ENCODE measurements at regions of chr12 and their contacts with region 1.

Region 1: GRCh38 chr12:46382964-46383653 is 10.5 kb upstream of the SLC38A2 start:
- H3K4me3 Mint-ChIP-seq: peak overlapping the region; percentile 87
- H3K27ac Mint-ChIP-seq: peak overlapping the region; percentile 99
- H3K4me1 Mint-ChIP-seq: peaks cover 44% of the 10 kb centered on the region
- H3K27me3 Mint-ChIP-seq: peaks cover 2% of the 10 kb centered on the region

Region 2: DNA sequence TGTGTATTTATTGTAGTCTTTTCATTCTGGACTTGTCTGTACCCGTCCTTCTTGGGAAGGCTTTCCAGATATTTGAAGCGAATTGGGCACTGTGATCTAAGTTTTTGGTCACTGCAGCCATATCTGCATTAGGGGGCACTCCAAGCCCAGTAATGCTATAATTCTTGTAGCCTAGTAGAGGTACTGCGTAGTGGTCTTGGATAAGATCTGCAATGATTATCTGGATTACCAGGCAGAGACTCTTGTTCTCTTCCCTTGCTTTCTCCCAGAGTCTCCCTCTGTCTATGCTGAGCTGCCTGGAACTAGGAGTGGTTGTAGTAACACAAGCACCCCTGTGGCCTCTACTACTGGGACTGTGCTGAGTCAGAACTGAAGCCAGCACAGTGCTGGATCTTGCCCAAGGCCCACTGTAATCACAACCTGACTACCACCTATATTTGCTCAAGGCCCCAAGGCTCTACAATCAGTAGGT is 40.5 kb before region 1 on chr12:
- intact Hi-C with region 1: no loop called
- H3K4me3 Mint-ChIP-seq: no peak overlapping the region
- H3K27ac Mint-ChIP-seq: no peak overlapping the region
- H3K4me1 Mint-ChIP-seq: no peaks in the 10 kb centered on the region
- H3K27me3 Mint-ChIP-seq: peaks cover 2% of the 10 kb centered on the region

Region 3: GRCh38 chr12:46372544-46373110 is 10.5 kb before region 1 on chr12 and contains the start of gene SLC38A2:
- intact Hi-C with region 1: loop called (anchors 1 kb)
- H3K4me3 Mint-ChIP-seq: peak within 1 kb of the TSS; percentile 93
- H3K27ac Mint-ChIP-seq: peak within 1 kb of the TSS; percentile 99
- H3K4me1 Mint-ChIP-seq: peaks cover 38% of the 10 kb centered on the region
- H3K27me3 Mint-ChIP-seq: peaks cover 6% of the 10 kb centered on the region

Region 4: DNA sequence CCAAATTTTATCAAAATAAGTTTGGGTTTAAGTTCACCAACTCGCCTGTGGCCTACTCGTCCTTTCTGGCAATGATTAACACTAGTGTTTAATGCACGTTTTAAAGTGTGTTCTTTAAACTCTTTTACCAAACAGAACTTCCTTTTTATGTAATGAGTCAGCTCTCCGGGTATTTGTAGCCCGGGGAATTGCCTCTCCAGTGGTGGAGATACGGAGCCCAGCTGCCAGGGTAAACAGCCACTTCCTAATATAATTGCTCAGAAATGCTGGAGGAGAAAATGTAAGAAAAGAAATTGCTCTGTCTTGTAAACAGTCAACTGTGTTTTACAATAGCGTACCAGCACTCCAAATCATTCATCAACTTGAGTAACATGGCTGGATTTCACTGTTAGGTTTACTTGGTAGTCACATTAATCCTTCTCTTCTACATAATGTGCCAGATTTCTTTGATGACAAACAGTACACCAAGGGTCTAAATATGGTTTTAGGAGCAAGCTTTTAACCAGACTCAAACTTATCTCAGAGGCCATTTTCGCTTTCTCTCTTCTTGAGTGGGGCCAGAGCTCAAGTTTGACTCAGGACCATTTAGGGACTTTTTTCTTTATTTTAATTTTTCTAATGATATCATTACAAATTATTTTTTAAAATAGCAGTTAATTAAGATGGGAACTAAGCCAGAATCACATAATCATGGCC is 90.7 kb after region 1 on chr12:
- intact Hi-C with region 1: loop called (anchors 5 kb)
- H3K4me3 Mint-ChIP-seq: peak overlapping the region; percentile 32
- H3K27ac Mint-ChIP-seq: peak overlapping the region; percentile 86
- H3K4me1 Mint-ChIP-seq: peaks cover 35% of the 10 kb centered on the region
- H3K27me3 Mint-ChIP-seq: no peaks in the 10 kb centered on the region

Region 5: GRCh38 chr12:46627686-46628085 is 244.6 kb after region 1 on chr12:
- intact Hi-C with region 1: no loop called
- H3K4me3 Mint-ChIP-seq: no peak overlapping the region
- H3K27ac Mint-ChIP-seq: no peak overlapping the region
- H3K4me1 Mint-ChIP-seq: peaks cover 5% of the 10 kb centered on the region
- H3K27me3 Mint-ChIP-seq: no peaks in the 10 kb centered on the region

Region 6: DNA sequence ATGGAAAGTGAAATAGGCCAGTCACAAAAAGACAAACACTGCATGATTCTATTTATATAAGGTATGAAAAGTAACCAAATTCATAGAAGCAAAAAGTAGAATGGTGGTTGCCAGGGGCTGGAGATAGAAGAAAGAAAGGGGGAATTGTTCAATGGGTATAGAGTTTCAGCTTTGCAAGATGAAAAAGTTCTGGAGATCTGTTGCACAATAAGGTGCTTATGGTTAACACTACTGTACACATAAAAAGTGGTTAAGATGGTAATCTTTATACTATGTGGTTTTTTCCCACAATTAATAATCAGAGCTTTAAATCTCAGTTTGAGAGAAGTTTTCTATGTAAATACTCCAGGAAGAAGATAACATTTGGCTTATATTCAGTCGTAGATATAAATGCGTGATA is 369.3 kb after region 1 on chr12:
- intact Hi-C with region 1: no loop called
- H3K4me3 Mint-ChIP-seq: no peak overlapping the region
- H3K27ac Mint-ChIP-seq: no peak overlapping the region
- H3K4me1 Mint-ChIP-seq: peaks cover 19% of the 10 kb centered on the region
- H3K27me3 Mint-ChIP-seq: no peaks in the 10 kb centered on the region

Measured in dendritic cell treated with granulocyte-macrophage colony-stimulating factor and Interleukin-4, amounts not matched to agents 40 ng/mL and 50 ng/mL, for 4 days (primary cell).